ENCODE measurements at regions of chr1 and their contacts with region 1.

Region 1: DNA sequence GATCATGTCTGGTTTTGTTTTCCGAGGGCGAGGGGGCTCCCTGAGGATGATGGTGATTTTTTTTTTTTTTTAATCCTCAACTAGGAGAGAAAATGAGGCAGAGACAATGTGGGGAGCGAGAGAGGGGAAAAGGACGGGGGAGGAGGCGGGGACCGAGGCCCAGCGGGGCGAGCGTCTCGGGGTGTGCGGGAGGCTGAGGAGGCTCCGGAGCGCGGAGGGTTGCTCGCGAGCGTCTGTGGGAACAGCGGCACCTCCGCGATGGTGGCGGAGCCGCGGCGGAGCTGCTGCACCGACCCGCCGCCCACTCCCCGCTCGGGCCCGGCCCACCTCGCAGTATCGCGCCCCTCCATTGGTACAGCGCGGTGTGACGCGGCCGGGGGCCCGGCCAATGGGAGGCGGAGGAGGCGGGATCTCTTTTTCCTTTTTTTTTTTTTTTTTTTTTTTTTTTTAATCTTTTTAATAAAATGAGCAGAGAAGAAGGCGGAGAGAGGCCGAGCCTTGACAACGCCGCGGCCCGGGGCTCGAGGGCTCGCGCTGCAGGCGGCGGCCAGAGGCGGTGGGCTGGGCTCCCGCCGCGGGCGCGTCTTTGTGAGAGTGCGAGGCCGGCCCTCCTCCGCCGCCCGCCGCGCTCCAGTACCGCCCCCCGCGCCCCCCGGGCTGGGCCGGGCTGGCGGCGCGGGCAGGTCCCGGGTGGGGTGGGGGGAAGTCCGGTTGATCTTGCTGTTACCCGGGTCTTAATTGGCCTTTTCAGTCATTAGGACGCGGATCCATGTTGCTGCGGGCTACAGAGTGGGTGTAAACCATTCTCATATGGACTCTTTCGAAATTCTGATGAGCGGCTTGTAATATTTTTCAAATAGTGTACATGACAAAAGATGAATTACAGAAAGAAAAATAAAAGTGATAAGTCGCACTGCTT is at the start of gene RERE:
- DNase-seq: peak; percentile 93 to 98
- H3K4me3 ChIP-seq: peak within 1 kb of the TSS; percentile 84
- H3K4me3 Mint-ChIP-seq: peak within 1 kb of the TSS; percentile 92
- H3K27ac Mint-ChIP-seq: peak within 1 kb of the TSS; percentile 92
- H3K4me1 ChIP-seq: peaks cover 9% of the 10 kb centered on the region; the same call in 1 of the 2 replicates
- H3K4me1 Mint-ChIP-seq: peaks cover 32% of the 10 kb centered on the region
- H3K27me3 ChIP-seq: no peaks in the 10 kb centered on the region
- H3K27me3 Mint-ChIP-seq: no peaks in the 10 kb centered on the region
- CTCF ChIP-seq: peak in 1 of 2 experiments; percentile 6
- total RNA-seq, gene RERE: 85.2 and 91.1 TPM in 2 replicates

Region 2: GRCh38 chr1:8571200-8571984 is 246.3 kb before region 1 on chr1:
- CTCF ChIA-PET with region 1: no interaction called
- POLR2A ChIA-PET with region 1: interaction called, 14 read pairs
- intact Hi-C with region 1: no loop called
- DNase-seq: peak; percentile 44 to 51
- H3K4me3 ChIP-seq: no peak overlapping the region
- H3K4me3 Mint-ChIP-seq: peak overlapping the region; percentile 55
- H3K27ac Mint-ChIP-seq: peak overlapping the region; percentile 56
- H3K4me1 ChIP-seq: peaks cover 64% of the 10 kb centered on the region
- H3K4me1 Mint-ChIP-seq: peaks cover 21% of the 10 kb centered on the region
- H3K27me3 ChIP-seq: no peaks in the 10 kb centered on the region
- H3K27me3 Mint-ChIP-seq: no peaks in the 10 kb centered on the region
- CTCF ChIP-seq: peak; percentile 10 to 26

Region 3: GRCh38 chr1:8746554-8746953 is 71.1 kb before region 1 on chr1:
- CTCF ChIA-PET with region 1: no interaction called
- POLR2A ChIA-PET with region 1: no interaction called
- intact Hi-C with region 1: no loop called
- DNase-seq: no peak
- H3K4me3 ChIP-seq: no peak overlapping the region
- H3K4me3 Mint-ChIP-seq: no peak overlapping the region
- H3K27ac Mint-ChIP-seq: peak overlapping the region; percentile 88
- H3K4me1 ChIP-seq: peaks cover 41% of the 10 kb centered on the region
- H3K4me1 Mint-ChIP-seq: peaks cover 30% of the 10 kb centered on the region
- H3K27me3 ChIP-seq: no peaks in the 10 kb centered on the region
- H3K27me3 Mint-ChIP-seq: no peaks in the 10 kb centered on the region
- CTCF ChIP-seq: no peak

Region 4: GRCh38 chr1:8789314-8790214 is 28.1 kb before region 1 on chr1:
- CTCF ChIA-PET with region 1: no interaction called
- POLR2A ChIA-PET with region 1: interaction called, 3 read pairs
- intact Hi-C with region 1: loop called (anchors 1 kb)
- DNase-seq: peak; percentile 87 to 91
- H3K4me3 ChIP-seq: peak overlapping the region; percentile 4; the same call in 1 of the 2 replicates
- H3K4me3 Mint-ChIP-seq: peak overlapping the region; percentile 72
- H3K27ac Mint-ChIP-seq: peak overlapping the region; percentile 93
- H3K4me1 ChIP-seq: peaks cover 30% of the 10 kb centered on the region
- H3K4me1 Mint-ChIP-seq: peaks cover 31% of the 10 kb centered on the region
- H3K27me3 ChIP-seq: no peaks in the 10 kb centered on the region
- H3K27me3 Mint-ChIP-seq: no peaks in the 10 kb centered on the region
- CTCF ChIP-seq: no peak

Measured in Caco-2 (cell line).